ENCODE measurements at regions of chr16 and their contacts with region 1.

Region 1: GRCh38 chr16:75471723-75472633 is 7.5 kb upstream of the TMEM170A start:
- DNase-seq: peak; percentile 15 to 67 (median 36)
- H3K4me3 ChIP-seq: no peak overlapping the region
- H3K4me3 Mint-ChIP-seq: no peak overlapping the region
- H3K27ac ChIP-seq: no peak overlapping the region
- H3K27ac Mint-ChIP-seq: peak overlapping the region in 2 of 8 donors; percentile 29 to 55
- H3K4me1 ChIP-seq: no peaks in the 10 kb centered on the region
- H3K4me1 Mint-ChIP-seq: peaks cover 3 to 5% (median 4%) of the 10 kb centered on the region in 3 donors
- H3K27me3 ChIP-seq: no peaks in the 10 kb centered on the region
- H3K27me3 Mint-ChIP-seq: peaks cover under 1 to 5% of the 10 kb centered on the region in 2 donors

Region 2: DNA sequence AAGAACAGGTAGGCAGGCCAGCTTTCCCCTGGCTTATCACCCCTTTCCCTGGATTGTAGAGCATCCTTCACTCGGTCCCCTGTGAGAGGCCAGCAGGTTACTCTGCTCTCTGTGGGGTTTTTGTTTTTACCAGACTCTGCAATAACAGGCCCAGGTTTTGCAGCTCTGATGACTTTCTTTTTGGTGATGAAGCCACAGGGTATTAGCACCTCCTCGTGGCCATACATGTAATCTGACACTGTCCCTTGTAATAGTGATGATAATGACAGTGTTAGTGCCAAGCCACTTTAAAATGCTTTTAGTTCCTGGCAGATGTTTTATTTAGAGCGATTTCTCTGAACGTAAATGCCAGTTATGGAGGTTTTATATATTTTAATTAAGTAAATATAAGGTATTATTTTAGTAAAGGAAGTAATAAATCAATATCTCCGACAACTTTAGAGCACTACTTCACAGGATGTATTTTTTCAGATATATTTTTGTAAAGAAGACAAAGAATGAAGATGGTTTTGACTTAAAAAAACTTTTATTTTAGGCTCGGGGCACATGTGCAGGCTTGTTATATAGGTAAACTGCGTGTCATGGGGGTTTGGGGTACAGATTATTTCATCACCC is 292.3 kb after region 1 on chr16:
- CTCF ChIA-PET with region 1: interaction called, 39 read pairs
- POLR2A ChIA-PET with region 1: no interaction called
- DNase-seq: peak; percentile 26 to 71 (median 56)
- H3K4me3 ChIP-seq: no peak overlapping the region
- H3K4me3 Mint-ChIP-seq: no peak overlapping the region
- H3K27ac ChIP-seq: no peak overlapping the region
- H3K27ac Mint-ChIP-seq: peak overlapping the region in 2 of 8 donors; percentile 32 to 85
- H3K4me1 ChIP-seq: no peaks in the 10 kb centered on the region
- H3K4me1 Mint-ChIP-seq: peaks cover 0 to 2% (median 0%) of the 10 kb centered on the region in 3 donors
- H3K27me3 ChIP-seq: no peaks in the 10 kb centered on the region
- H3K27me3 Mint-ChIP-seq: peaks cover 3 to 12% of the 10 kb centered on the region in 2 donors

Measured in CD8-positive, alpha-beta memory T cell (primary cell).